ENCODE measurements at regions of chr3 and their contacts with region 1.

Region 1: DNA sequence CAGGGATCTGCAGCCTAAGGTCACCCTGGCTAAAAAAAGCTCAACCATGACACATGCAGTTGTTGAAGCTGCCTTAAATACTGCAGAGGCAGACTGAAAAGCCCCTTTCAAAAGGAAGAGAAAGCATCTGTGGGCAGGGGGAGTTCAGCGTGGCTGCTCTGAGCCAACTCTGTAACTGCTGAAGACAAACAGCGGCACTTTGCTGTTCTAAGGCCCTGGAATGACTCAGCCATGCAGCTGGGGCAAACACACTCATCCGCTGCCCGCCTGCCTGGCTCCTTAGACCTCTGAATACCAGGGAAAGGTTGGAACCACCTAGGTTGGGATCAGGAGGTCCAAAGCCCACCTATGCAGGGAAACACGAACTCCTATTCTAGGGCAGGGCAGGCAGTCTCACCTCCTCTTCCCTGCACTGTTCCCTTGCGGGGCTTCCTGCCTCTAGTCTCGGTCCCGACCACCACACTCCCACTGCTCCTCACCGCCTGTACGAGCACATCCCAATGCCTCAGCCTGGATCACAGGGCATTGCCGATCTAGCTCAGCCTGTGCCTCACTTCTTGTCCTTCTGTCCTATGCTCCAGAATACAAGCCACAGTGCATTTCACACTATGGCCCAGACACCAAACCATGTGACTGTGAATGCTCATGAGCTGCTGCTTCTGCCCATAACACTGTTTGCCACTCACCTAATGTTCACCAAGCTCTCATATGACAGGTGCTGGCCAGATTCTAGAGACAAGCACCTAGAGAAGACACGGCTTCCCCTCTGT is 6.6 kb upstream of the MUSTN1 start:
- DNase-seq: peak; percentile 54

Region 2: GRCh38 chr3:52867098-52867800 is 25.9 kb after region 1 on chr3:
- intact Hi-C with region 1: no loop called
- DNase-seq: no peak

Region 3: DNA sequence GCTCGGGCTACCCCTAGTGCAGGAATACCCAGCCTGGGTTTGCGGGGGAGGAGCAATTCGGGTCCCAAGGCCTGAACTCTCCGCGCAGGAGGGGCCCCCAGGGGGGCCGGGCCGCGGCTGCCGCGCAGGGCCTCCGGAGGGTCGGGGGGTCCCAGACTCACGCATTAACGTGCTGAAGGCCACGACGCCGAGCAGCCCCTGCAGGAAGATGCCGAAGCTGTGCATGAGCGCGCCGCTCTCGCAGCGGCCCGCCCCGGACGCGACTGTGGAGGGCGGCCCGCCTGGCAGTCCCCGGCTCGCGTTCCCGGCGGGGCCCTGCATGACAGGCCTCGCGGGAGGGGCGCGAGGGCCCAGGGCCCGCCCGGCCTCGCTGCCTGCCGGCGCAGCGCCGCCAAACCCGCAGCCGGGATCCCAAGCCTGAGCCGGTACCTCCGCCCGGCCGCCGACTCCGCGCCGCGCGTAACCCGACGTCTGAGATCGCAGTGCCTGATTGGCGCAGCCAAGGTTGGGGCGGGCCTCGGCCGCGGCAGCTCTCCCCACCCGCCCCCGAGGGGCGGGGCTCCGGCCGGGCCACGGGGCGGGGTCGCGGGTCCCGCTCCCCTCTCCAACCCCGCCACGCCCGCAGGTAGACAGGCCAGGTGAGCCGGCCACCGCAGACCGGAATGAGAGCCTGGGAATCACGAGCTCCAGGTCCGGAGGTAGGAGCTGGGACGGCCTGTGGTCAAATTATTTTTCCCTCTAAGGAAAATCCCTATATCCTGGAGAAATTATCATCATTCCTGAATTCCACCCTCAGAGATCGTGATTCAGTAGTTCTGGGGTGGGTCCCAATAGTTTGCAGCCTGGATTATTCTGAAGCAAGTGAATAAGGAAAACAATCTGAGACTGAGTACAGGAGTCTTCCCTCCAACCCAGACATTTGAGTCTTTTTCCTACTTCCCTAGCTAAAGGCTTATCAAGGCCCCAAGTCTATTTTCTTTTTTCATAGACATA is 56.0 kb after region 1 on chr3 and contains the start of gene STIMATE:
- intact Hi-C with region 1: loop called in 1 of 2 experiments (anchors 5 kb)
- DNase-seq: peak; percentile 96
- total RNA-seq, gene STIMATE: 20.7 to 24.1 TPM

Measured in posterior vena cava (tissue), 2 donors.